ENCODE measurements at regions of chr10 and their contacts with region 1.

Region 1: DNA sequence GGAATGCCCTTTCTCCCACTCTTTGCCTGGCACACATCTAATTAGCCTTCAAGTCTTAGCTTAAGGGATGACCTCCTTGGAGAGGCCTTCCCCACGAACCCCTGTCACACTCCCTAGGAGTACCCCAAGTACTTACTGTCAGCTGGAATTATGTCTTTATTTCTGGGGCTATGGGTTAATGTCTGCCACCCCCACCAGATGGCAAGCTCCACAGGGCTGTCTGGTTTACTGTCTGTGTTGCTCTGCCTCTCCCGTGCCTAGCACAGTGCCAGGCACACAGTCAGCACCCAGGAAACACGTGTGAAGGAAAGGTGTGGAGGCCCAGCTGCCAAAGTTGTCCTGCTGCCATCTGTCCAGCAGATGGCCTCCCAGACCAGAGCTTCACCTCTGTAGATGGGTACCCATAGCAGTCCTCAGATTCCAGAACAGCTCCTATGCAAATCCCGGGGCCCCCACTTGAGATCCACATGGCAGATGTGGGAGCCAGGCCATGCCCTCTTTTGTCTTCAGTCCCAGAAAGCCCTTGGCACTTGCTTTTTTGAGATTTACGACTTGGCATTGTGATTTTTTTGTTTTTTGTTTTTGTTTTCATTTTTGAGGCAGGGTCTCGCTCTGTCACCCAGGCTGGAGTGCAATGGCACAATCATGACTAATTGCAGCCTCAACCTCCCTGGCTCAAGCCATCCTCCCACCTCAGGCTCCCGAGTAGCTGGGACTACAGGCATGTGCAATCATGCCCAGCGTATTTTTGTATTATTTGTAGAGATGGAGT is 17.2 kb upstream of the PALD1 start:
- DNase-seq: peak; percentile 74
- ATAC-seq: peak; percentile 78
- H3K4me3 ChIP-seq: no peak overlapping the region
- H3K4me3 Mint-ChIP-seq: no peak overlapping the region
- H3K27ac ChIP-seq: no peak overlapping the region
- H3K27ac Mint-ChIP-seq: no peak overlapping the region
- H3K4me1 ChIP-seq: peaks cover 12 to 15% of the 10 kb centered on the region in 2 donors
- H3K4me1 Mint-ChIP-seq: peaks cover 17% of the 10 kb centered on the region
- H3K27me3 ChIP-seq: peaks cover 0 to 23% (median 12%) of the 10 kb centered on the region in 4 experiments
- H3K27me3 Mint-ChIP-seq: peaks cover 23% of the 10 kb centered on the region
- CTCF ChIP-seq: peak; percentile 90

Region 2: GRCh38 chr10:69516316-69516715 is 945.1 kb before region 1 on chr10:
- CTCF ChIA-PET with region 1: no interaction called
- POLR2A ChIA-PET with region 1: no interaction called
- intact Hi-C with region 1: no loop called
- DNase-seq: peak; percentile 22
- ATAC-seq: no peak
- H3K4me3 ChIP-seq: no peak overlapping the region
- H3K4me3 Mint-ChIP-seq: no peak overlapping the region
- H3K27ac ChIP-seq: no peak overlapping the region
- H3K27ac Mint-ChIP-seq: no peak overlapping the region
- H3K4me1 ChIP-seq: no peaks in the 10 kb centered on the region
- H3K4me1 Mint-ChIP-seq: no peaks in the 10 kb centered on the region
- H3K27me3 ChIP-seq: peaks cover 0 to 29% (median 8%) of the 10 kb centered on the region in 4 experiments
- H3K27me3 Mint-ChIP-seq: peaks cover 46% of the 10 kb centered on the region
- CTCF ChIP-seq: no peak

Region 3: DNA sequence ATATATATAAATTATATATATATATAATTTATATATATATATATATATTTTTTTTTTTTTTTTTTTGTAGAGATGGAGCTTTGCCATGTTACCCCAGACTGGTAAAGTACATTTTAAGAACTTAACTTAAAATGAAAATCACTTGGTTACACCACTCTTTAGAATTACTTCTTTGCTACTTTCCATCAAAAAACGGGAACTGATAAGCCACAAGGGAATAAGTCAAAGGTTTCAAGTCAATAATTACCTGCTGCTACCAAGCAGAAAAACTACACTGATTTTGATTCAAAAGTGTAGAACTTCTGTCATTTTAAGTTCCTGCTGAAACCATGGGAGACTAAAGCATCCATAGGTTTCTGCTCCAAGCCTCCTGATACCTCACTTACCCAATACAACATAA is 240.4 kb before region 1 on chr10:
- CTCF ChIA-PET with region 1: interaction called, 15 read pairs
- POLR2A ChIA-PET with region 1: no interaction called
- intact Hi-C with region 1: no loop called
- DNase-seq: no peak
- ATAC-seq: no peak
- H3K4me3 ChIP-seq: no peak overlapping the region
- H3K4me3 Mint-ChIP-seq: no peak overlapping the region
- H3K27ac ChIP-seq: no peak overlapping the region
- H3K27ac Mint-ChIP-seq: no peak overlapping the region
- H3K4me1 ChIP-seq: peaks cover 5% of the 10 kb centered on the region in 2 donors
- H3K4me1 Mint-ChIP-seq: peaks cover 12% of the 10 kb centered on the region
- H3K27me3 ChIP-seq: no peaks in the 10 kb centered on the region
- H3K27me3 Mint-ChIP-seq: no peaks in the 10 kb centered on the region
- CTCF ChIP-seq: no peak

Region 4: DNA sequence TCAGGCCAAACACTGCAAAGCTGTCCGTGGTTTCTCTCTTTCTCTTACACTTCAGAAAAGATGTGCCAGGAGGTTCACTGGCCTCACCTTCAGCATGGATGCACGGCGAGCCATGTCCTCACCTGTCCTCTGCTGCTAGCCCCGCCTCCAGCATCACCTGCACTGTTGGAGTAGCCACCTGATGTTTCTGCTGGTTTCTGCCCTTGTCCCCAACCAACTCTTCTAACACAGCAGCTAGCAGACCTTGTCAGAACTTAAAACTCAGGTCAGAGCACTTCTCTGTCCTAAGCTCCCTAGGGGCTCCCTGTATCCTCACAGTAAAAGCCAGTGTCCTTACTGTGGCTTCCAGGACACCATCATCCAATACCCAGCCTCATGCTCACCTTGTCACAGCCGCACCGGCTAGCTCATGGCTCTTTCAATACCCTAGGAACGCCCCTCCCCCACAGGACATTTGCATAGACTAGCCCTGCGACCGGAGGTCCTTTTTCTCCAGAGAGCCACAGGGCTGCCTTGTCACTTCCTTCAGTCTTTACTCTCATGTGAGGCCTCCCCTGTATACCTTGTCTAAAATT is 32.3 kb after region 1 on chr10:
- CTCF ChIA-PET with region 1: interaction called, 19 read pairs
- POLR2A ChIA-PET with region 1: interaction called, 7 read pairs
- intact Hi-C with region 1: loop called (anchors 1 kb)
- DNase-seq: peak; percentile 78
- ATAC-seq: peak; percentile 73
- H3K4me3 ChIP-seq: peak overlapping the region in 3 of 5 experiments; percentile 13 to 57 (median 28)
- H3K4me3 Mint-ChIP-seq: peak overlapping the region; percentile 68
- H3K27ac ChIP-seq: peak overlapping the region; percentile 81 to 88
- H3K27ac Mint-ChIP-seq: peak overlapping the region; percentile 89
- H3K4me1 ChIP-seq: peaks cover 65 to 69% of the 10 kb centered on the region in 2 donors
- H3K4me1 Mint-ChIP-seq: peaks cover 76% of the 10 kb centered on the region
- H3K27me3 ChIP-seq: no peaks in the 10 kb centered on the region
- H3K27me3 Mint-ChIP-seq: no peaks in the 10 kb centered on the region
- CTCF ChIP-seq: no peak

Region 5: DNA sequence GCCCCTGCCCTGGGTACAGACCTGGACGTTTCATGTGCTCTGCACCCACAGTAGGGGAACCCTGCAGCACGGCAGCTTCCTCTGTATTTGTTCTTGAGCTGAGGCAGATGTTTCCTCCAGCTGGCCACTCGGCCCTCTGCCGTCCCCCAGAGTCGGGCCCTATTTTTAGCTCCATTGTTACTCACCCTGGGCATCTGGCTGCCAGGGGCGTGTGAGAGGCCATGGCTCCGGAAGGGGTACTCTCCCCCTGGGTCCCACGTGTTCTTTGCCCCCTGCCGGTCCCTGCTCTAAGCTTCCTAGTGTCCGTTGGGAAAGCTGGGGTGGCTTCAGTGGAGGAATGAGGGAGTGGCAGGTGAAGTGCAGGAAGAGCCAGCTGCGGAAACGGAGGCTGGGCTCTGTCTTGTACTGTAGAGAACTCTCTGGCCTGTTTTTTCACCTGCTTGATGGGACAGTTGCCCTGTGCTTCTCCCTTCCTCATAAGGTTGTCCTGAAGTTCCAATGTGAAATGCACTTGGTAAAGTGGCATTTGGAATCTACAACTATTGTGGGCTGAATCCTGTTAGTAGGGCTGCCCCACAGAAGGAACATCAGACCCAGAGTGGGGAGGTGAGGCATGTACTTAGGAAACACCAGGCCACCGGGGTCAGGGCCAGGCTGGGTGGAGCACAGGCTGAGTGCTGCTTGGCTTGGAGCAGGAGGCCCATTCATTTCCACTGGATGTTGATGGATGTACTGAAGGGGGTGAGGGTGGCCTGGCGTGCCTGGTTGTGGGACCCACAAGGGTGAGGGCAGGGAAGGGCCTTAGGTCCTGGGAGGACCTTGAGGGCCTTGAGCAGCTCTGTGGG is 47.7 kb after region 1 on chr10:
- CTCF ChIA-PET with region 1: interaction called, 26 read pairs
- POLR2A ChIA-PET with region 1: no interaction called
- intact Hi-C with region 1: loop called (anchors 5 kb)
- DNase-seq: no peak
- ATAC-seq: peak; percentile 46
- H3K4me3 ChIP-seq: peak overlapping the region in 1 of 5 experiments; percentile 8
- H3K4me3 Mint-ChIP-seq: peak overlapping the region; percentile 63
- H3K27ac ChIP-seq: no peak overlapping the region
- H3K27ac Mint-ChIP-seq: peak overlapping the region; percentile 56
- H3K4me1 ChIP-seq: peaks cover 24 to 25% of the 10 kb centered on the region in 2 donors
- H3K4me1 Mint-ChIP-seq: peaks cover 35% of the 10 kb centered on the region
- H3K27me3 ChIP-seq: peaks cover 0 to 5% (median 0%) of the 10 kb centered on the region in 4 experiments
- H3K27me3 Mint-ChIP-seq: no peaks in the 10 kb centered on the region
- CTCF ChIP-seq: no peak

Region 6: GRCh38 chr10:70540089-70540788 is 78.8 kb after region 1 on chr10:
- CTCF ChIA-PET with region 1: interaction called, 162 read pairs
- POLR2A ChIA-PET with region 1: no interaction called
- intact Hi-C with region 1: loop called (anchors 1 kb)
- DNase-seq: peak; percentile 54
- ATAC-seq: peak; percentile 47
- H3K4me3 ChIP-seq: no peak overlapping the region
- H3K4me3 Mint-ChIP-seq: no peak overlapping the region
- H3K27ac ChIP-seq: no peak overlapping the region
- H3K27ac Mint-ChIP-seq: no peak overlapping the region
- H3K4me1 ChIP-seq: no peaks in the 10 kb centered on the region
- H3K4me1 Mint-ChIP-seq: no peaks in the 10 kb centered on the region
- H3K27me3 ChIP-seq: no peaks in the 10 kb centered on the region
- H3K27me3 Mint-ChIP-seq: no peaks in the 10 kb centered on the region
- CTCF ChIP-seq: peak; percentile 66

Region 7: GRCh38 chr10:70758757-70759514 is 297.5 kb after region 1 on chr10:
- CTCF ChIA-PET with region 1: interaction called, 91 read pairs
- POLR2A ChIA-PET with region 1: no interaction called
- intact Hi-C with region 1: no loop called
- DNase-seq: peak; percentile 65
- ATAC-seq: peak; percentile 33
- H3K4me3 ChIP-seq: no peak overlapping the region
- H3K4me3 Mint-ChIP-seq: no peak overlapping the region
- H3K27ac ChIP-seq: no peak overlapping the region
- H3K27ac Mint-ChIP-seq: no peak overlapping the region
- H3K4me1 ChIP-seq: no peaks in the 10 kb centered on the region
- H3K4me1 Mint-ChIP-seq: no peaks in the 10 kb centered on the region
- H3K27me3 ChIP-seq: no peaks in the 10 kb centered on the region
- H3K27me3 Mint-ChIP-seq: peaks cover 4% of the 10 kb centered on the region
- CTCF ChIP-seq: peak; percentile 92

Measured in B cell (primary cell).